HEK293 (cell line): ENCODE measurements at regions of chr12 and their contacts with region 1.

Region 1: GRCh38 chr12:1619587-1619986 is 9.4 kb upstream of the WNT5B start:
- H3K4me3 ChIP-seq: no peak overlapping the region
- H3K27ac ChIP-seq: no peak overlapping the region
- H3K4me1 ChIP-seq: peaks cover 7% of the 10 kb centered on the region
- CTCF ChIP-seq: no peak

Region 2: DNA sequence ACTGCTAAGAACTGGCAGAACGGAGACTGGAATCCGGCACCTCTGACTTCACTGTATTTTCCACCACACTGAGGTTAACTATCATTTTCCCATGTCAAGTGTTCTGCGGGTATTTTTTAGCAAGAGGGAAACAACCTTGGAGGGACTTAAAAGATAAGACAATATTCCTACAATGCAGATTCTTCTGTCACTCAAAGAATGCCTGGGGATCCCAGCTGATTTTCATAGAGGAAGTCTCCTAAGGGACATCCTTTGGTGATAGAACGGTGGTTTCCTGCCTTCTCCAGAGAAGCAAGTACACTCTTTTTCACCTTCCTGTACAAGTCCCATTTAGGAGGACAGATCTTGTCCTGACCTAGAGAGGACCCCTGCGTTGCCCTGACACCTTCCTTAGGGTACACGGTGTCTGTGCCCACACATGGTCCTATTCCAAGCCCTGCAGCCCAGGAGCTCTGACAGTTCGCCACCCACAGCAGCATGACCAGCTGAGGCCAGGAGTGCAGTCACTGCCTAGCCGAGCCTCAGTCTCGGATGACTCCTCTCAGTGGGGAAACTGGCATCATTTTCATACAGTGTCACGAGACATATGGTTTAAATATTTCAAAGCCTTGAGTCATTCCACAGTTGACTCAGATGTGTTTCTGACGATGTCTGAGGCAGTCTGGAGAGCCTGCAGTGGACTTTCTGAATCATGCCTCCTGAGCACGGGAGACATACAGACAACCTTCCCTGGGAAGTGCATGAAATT is 993.9 kb after region 1 on chr12:
- CTCF ChIA-PET with region 1: interaction called, 10 read pairs
- POLR2A ChIA-PET with region 1: no interaction called
- H3K4me3 ChIP-seq: no peak overlapping the region
- H3K27ac ChIP-seq: no peak overlapping the region
- H3K4me1 ChIP-seq: no peaks in the 10 kb centered on the region
- CTCF ChIP-seq: no peak